Mammary epithelial cell (primary cell): ENCODE measurements at regions of chr15 and their contacts with region 1.

Region 1: DNA sequence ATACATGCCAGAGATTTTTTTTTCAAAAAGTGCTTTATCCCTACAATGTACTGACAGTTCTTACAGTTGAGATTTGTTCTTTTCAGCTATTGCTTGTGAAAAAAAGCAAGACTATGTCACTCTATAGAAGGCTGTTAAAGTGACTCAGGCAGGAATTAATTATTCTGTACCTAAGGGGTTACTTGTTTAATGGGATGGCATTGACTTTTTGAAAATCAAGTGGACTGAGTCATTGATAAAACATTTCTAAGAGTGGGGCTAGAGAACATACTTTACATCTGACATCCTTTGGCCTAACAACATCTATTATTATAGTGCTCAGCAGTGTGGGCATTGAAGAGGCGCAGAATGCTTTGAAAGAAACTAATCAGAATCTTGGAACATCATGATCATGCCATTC is 34.3 kb downstream of the INTS14 start:
- DNase-seq: peak; percentile 32
- H3K4me3 ChIP-seq: no peak overlapping the region
- H3K27ac ChIP-seq: no peak overlapping the region
- H3K4me1 ChIP-seq: peaks cover 11% of the 10 kb centered on the region
- H3K27me3 ChIP-seq: no peaks in the 10 kb centered on the region
- CTCF ChIP-seq: no peak

Region 2: DNA sequence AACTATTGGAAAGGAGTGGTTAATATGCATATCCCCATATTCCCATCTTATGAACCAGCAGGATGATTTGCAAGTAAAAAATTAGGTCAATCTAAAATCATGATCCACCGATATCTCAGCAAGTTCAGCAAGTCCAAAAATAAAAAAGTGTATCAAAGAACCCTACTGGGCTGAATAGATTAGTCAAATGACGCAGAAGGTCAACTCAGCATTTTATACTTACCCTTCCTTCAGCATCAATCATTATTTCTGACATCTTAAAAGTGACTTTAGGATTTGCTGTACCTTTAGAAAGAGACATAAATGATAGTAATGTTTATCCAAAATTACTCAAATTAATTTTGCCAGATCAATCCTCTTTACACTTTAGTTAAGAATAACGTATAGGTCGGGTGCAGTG is 91.8 kb before region 1 on chr15:
- CTCF ChIA-PET with region 1: no interaction called
- dilution Hi-C with region 1: no loop called
- in situ Hi-C with region 1: no loop called
- intact Hi-C with region 1: loop called (anchors 10 kb)
- DNase-seq: no peak
- H3K4me3 ChIP-seq: no peak overlapping the region
- H3K27ac ChIP-seq: no peak overlapping the region
- H3K4me1 ChIP-seq: no peaks in the 10 kb centered on the region
- H3K27me3 ChIP-seq: no peaks in the 10 kb centered on the region
- CTCF ChIP-seq: no peak

Region 3: DNA sequence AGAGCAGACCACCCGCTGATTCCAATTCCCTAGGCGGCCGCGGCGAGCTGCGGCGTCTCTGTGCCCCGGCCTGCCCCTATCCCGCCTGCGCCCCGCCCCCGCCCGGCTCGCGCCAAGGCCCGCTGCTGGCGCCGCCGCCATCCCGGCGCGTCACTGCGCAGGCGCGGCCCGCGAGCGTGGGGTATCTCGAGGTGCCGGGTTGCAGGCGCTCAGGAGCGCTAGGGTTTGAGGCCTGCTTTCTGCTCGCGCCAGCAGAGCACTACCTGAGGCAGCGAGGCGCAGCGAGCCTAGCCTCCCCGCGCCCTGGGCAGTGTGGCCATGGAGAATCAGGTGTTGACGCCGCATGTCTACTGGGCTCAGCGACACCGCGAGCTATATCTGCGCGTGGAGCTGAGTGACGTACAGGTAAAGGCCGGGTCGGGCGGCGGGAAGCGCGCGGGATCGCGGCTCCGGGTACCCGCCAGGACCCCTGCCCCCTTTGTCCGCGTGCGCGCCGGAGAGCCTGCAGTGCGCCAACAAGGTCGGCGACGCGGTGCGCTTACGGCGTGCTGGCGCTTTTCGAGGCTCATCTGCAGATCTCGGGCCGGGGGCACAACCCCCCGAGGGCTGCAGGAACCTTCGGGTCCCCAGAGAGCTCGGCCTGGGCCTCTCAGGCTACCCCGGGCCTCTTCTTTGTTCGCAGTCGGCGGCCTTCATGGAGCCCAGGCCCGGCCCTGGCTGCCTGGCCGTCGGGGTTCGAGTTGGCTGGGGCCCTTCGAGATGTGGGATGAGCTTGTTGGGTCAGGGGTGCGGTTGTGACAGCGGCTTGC is 46.1 kb before region 1 on chr15 and contains the start of gene HACD3:
- CTCF ChIA-PET with region 1: no interaction called
- dilution Hi-C with region 1: loop called (anchors 5 kb)
- in situ Hi-C with region 1: no loop called
- intact Hi-C with region 1: no loop called
- DNase-seq: peak; percentile 73
- H3K4me3 ChIP-seq: peak within 1 kb of the TSS; percentile 83 to 99 (median 89)
- H3K27ac ChIP-seq: peak within 1 kb of the TSS; percentile 71
- H3K4me1 ChIP-seq: peaks cover 23% of the 10 kb centered on the region
- H3K27me3 ChIP-seq: no peaks in the 10 kb centered on the region
- CTCF ChIP-seq: no peak
- total RNA-seq, gene HACD3: 49.6 to 55.8 TPM

Region 4: DNA sequence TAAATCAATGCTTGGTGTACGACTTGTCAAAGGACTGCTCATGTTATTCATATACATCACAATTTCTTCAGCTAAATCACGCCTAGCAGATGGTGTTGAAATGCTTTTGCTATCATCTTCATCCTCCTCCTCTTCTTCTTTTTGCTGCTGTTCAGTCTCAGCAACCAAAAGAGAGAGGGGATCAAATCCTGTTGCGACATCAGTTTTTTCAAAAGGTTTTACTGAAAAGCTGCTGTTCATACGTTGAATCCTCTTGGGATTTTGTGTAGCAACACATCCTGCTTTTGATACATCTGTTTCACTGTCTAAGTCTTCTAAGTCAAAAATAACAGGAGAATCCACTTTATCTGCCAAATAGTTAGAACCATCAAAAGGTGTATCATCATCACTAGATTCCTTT is 114.1 kb after region 1 on chr15:
- CTCF ChIA-PET with region 1: no interaction called
- dilution Hi-C with region 1: no loop called
- in situ Hi-C with region 1: no loop called
- intact Hi-C with region 1: no loop called
- DNase-seq: no peak
- H3K4me3 ChIP-seq: no peak overlapping the region
- H3K27ac ChIP-seq: no peak overlapping the region
- H3K4me1 ChIP-seq: no peaks in the 10 kb centered on the region
- H3K27me3 ChIP-seq: no peaks in the 10 kb centered on the region
- CTCF ChIP-seq: no peak